A673 (cell line): ENCODE measurements at regions of chr11 and their contacts with region 1.

Region 1: GRCh38 chr11:61733120-61733978 is 19.1 kb upstream of the MYRF start:
- DNase-seq: peak; percentile 93
- H3K4me3 ChIP-seq: no peak overlapping the region
- H3K27ac ChIP-seq: no peak overlapping the region
- H3K4me1 ChIP-seq: no peaks in the 10 kb centered on the region
- H3K27me3 ChIP-seq: no peaks in the 10 kb centered on the region
- CTCF ChIP-seq: peak; percentile 100

Region 2: GRCh38 chr11:61679893-61680621 is 53.3 kb before region 1 on chr11 and contains the start of gene DAGLA:
- CTCF ChIA-PET with region 1: interaction called, 4 read pairs
- POLR2A ChIA-PET with region 1: no interaction called
- intact Hi-C with region 1: loop called (anchors 1 kb)
- DNase-seq: peak; percentile 85
- H3K4me3 ChIP-seq: peak within 1 kb of the TSS; percentile 47
- H3K27ac ChIP-seq: no peak within 1 kb of the TSS
- H3K4me1 ChIP-seq: peaks cover 15% of the 10 kb centered on the region
- H3K27me3 ChIP-seq: peaks cover 22% of the 10 kb centered on the region
- CTCF ChIP-seq: peak; percentile 89
- total RNA-seq, gene DAGLA: 10.9 and 11.0 TPM in 2 replicates

Region 3: GRCh38 chr11:61718621-61719302 is 14.6 kb before region 1 on chr11:
- CTCF ChIA-PET with region 1: interaction called, 16 read pairs
- POLR2A ChIA-PET with region 1: no interaction called
- intact Hi-C with region 1: no loop called
- DNase-seq: peak; percentile 92
- H3K4me3 ChIP-seq: peak overlapping the region; percentile 63
- H3K27ac ChIP-seq: peak overlapping the region; percentile 82
- H3K4me1 ChIP-seq: peaks cover 15% of the 10 kb centered on the region
- H3K27me3 ChIP-seq: no peaks in the 10 kb centered on the region
- CTCF ChIP-seq: no peak

Region 4: DNA sequence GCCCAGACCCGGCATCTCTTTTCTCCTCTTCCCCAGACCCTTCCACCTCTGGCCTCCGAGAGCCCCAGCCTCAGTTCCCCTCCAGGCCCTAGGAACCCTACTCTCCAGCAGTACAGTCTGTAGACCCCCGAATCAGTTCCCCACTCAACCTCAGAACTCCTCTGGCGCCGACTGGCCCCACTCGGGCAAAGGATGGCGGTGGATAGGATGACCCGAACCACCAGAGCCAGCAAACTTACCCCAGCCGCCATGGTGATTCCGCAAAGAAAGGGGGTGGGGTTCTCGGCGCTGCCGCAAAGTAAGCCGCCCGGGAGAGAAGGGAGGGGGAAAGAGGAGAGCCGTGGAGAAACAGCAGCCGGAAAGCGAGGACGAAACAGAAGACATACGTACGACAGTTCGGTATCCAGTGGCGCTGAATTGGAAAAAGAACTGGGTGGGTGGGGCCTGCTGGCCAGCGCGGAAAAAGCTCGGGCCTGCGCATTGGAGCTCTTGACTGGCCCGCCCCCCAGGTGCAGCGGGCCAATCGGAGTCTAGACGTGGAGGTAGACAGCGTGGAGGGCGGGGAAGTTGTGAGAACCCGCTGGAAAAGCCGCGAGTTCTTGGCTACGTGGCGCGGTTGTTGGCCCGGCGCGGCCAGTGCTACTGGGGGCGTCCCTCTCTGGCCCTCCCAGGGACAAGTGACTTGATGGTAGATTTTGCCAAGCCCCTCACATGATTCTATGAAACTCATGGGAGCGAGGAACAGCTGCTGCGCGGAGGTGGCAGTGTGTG is 840.4 kb after region 1 on chr11 and contains the start of gene EEF1G:
- CTCF ChIA-PET with region 1: interaction called, 11 read pairs
- POLR2A ChIA-PET with region 1: no interaction called
- intact Hi-C with region 1: no loop called
- DNase-seq: peak; percentile 100
- H3K4me3 ChIP-seq: peak within 1 kb of the TSS; percentile 65
- H3K27ac ChIP-seq: peak within 1 kb of the TSS; percentile 88
- H3K4me1 ChIP-seq: peaks cover 31% of the 10 kb centered on the region
- H3K27me3 ChIP-seq: no peaks in the 10 kb centered on the region
- CTCF ChIP-seq: no peak
- total RNA-seq, gene EEF1G: 1,804 and 1,817 TPM in 2 replicates

Region 5: GRCh38 chr11:63490551-63491239 is 1757.3 kb after region 1 on chr11 and contains the start of gene PLAAT5:
- CTCF ChIA-PET with region 1: no interaction called
- POLR2A ChIA-PET with region 1: no interaction called
- intact Hi-C with region 1: no loop called
- DNase-seq: no peak
- H3K4me3 ChIP-seq: peak within 1 kb of the TSS; percentile 29
- H3K27ac ChIP-seq: no peak within 1 kb of the TSS
- H3K4me1 ChIP-seq: peaks cover 5% of the 10 kb centered on the region
- H3K27me3 ChIP-seq: peaks cover 72% of the 10 kb centered on the region
- CTCF ChIP-seq: no peak
- total RNA-seq, gene PLAAT5: not detected in 2 replicates